ENCODE measurements at regions of chr18 and their contacts with region 1.

Region 1: DNA sequence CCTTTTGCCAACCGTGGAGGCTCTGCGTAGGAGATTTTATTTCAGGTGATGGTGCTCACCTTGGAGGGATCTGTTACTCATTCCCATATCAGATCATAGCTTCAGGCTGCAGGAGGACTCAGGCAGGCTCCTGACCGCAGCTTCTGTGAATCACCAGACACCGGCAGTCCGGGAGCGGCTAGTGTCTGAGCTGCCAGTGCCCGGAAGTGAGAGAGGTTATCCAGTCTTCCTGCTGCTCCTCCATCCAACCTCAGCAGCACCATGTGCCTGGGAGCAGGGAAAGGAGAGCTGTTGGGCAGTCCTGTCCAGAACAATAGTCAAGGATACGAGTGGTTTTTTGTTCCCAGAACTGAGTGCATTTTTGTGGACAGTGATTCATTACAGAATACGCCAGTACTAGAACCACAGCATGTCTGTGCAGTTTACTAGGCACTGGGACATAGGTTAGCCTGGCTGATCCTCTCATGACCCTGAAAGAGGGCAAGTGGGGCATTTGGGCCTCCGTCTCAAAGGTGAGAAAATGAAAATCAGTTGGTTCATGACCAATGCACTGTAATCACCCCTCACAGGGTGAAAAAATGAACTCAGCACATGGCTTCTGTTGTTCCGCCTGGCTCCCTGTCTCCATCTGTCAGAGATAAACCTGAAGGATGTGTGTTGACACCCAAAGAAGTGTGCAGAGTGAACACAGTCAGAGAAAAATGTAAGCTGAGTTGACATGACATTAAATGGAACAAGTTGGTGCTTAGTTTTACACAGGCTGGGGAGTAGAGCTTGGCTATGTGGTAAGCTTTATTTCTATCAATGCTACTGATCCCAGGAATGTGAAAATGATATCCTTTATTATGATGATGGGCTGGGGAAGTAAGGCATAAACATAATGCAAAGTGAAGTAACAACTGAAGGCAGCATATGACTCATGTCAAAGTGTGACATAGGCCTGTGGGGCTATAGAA is 12.2 kb downstream of the FHOD3 start:
- DNase-seq: peak in 1 of 5 donors; percentile 23
- ATAC-seq: peak in 3 of 4 donors; percentile 41 to 54 (median 51)
- H3K4me3 ChIP-seq: no peak overlapping the region
- H3K27ac ChIP-seq: peak overlapping the region in 8 of 12 donors; percentile 8 to 54 (median 20)
- H3K4me1 ChIP-seq: peaks cover 0 to 85% (median 23%) of the 10 kb centered on the region in 12 donors
- H3K27me3 ChIP-seq: peaks cover 0 to 4% (median 0%) of the 10 kb centered on the region in 9 donors
- CTCF ChIP-seq: no peak
- POLR2A ChIP-seq: no peak

Region 2: DNA sequence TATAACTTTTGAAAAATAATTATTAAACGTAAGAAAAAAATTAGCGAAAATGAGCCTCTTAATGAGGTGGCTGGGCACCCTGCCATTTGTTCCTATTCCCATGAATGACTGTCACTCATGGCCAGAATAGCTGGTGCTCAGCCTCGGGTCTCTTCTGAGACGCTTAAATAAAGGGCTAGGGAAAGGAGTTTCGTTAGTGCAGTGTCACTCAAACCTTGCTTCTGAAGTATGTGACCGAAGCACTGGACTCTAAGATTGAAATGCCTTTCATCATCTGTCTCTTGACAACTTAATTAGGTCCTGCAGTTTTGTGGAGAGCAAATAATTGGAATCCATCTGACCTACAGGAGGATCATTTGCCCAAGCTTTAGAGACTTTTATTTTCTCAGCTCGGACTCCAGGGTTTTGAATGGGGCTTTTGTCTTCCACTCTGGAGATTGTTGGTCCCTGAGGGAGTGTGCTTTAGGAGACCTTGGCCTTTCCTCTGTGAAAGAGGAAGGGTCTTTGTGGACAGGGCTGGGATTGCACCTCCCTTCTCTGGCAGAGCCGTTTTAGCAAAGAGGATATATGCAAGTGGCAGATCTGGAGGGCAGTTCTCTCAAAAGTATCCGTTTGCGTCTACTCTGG is 54.5 kb before region 1 on chr18:
- intact Hi-C with region 1: no loop called
- DNase-seq: no peak
- ATAC-seq: no peak
- H3K4me3 ChIP-seq: no peak overlapping the region
- H3K27ac ChIP-seq: no peak overlapping the region
- H3K4me1 ChIP-seq: no peaks in the 10 kb centered on the region
- H3K27me3 ChIP-seq: no peaks in the 10 kb centered on the region
- CTCF ChIP-seq: no peak
- POLR2A ChIP-seq: no peak

Region 3: DNA sequence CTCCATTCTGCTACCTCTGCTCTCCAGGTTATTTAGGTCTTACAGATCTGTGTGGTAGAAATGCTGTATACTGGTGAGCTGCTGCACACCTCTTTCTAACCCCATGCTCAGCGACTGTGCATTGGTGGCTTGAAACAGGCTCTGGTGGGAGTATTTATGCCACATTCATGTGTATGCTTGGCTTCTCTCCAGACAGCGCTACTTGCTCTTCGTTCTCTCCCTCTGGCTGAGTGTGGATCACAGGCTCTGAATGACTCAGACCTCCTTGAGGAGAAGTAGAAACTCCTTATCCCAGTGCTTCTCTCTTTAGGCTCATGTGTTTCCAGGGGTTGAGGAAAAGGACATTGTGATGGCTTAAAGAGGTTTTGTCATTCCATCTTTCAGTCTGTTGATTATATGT is 42.7 kb after region 1 on chr18:
- intact Hi-C with region 1: loop called in 1 of 10 experiments (anchors 10 kb)
- DNase-seq: no peak
- ATAC-seq: peak in 3 of 4 donors; percentile 14 to 37 (median 15)
- H3K4me3 ChIP-seq: no peak overlapping the region
- H3K27ac ChIP-seq: peak overlapping the region in 3 of 12 donors; percentile 1 to 38 (median 34)
- H3K4me1 ChIP-seq: peaks cover 0 to 68% (median 17%) of the 10 kb centered on the region in 12 donors
- H3K27me3 ChIP-seq: no peaks in the 10 kb centered on the region
- CTCF ChIP-seq: no peak
- POLR2A ChIP-seq: no peak

Measured in heart left ventricle (tissue), 16 donors.